SK-N-SH (cell line): ENCODE measurements at regions of chr7 and their contacts with region 1.

Region 1: DNA sequence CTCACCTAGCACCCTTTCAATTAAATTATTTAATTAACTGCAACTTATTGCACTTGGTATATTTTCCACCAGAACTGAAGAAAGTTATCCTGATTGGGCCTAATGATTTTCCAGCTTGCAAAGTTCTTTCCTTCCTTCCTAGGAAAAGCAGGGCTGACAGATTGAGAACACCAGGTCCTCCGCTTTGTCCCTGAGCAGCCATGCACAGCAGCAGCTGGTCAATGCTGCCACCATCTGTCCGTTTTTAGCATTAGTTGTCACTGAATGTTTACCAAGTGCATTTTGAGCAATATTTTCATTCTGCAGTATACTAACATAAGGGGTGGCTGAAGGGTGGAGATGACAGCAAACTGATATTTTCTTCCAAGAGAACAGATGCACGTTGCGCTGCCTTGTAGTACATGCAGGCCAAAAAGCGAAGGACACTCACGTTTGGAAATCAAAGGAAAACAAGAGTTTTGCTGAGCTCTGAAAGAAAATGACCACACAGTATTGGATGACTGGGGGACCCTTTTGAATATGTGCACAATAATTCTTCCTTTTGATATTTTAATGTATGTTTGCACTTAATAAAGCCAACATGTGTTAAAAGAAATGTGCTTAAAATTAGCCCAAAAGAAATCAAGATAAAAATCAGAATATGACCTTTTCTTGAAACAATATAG is 248.8 kb upstream of the PTN start:
- DNase-seq: peak; percentile 74
- H3K4me3 ChIP-seq: no peak overlapping the region
- H3K27ac ChIP-seq: peak overlapping the region in 1 of 2 experiments; percentile 48; a peak in 1 of 4 replicates
- H3K4me1 ChIP-seq: peaks cover 0 to 13% of the 10 kb centered on the region in 2 experiments; a peak in 3 of 4 replicates
- H3K27me3 ChIP-seq: no peaks in the 10 kb centered on the region
- CTCF ChIP-seq: peak; percentile 99
- EP300 ChIP-seq: no peak
- RAD21 ChIP-seq: peak; percentile 100

Region 2: DNA sequence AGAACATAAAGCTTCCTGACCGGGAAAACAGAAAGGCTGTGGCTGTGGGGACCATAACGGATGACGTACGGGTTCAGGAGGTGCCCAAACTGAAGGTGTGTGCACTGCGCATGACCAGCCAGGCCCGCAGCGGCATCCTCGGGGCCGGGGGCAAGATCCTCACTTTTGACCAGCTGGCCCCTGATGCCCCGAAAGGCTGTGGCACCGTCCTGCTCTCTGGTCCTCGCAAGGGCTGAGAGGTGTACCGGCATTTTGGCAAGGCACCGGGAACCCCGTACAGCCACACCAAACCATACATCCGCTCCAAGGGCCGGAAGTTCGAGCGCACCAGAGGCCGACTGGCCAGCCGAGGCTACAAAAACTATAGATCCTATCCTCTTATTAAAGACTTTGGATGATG is 428.1 kb before region 1 on chr7:
- CTCF ChIA-PET with region 1: interaction called, 117 read pairs
- POLR2A ChIA-PET with region 1: no interaction called
- DNase-seq: no peak
- H3K4me3 ChIP-seq: no peak overlapping the region
- H3K27ac ChIP-seq: no peak overlapping the region
- H3K4me1 ChIP-seq: peaks cover 0 to under 1% of the 10 kb centered on the region in 2 experiments; a peak in 2 of 4 replicates
- H3K27me3 ChIP-seq: no peaks in the 10 kb centered on the region
- CTCF ChIP-seq: no peak
- EP300 ChIP-seq: no peak
- RAD21 ChIP-seq: no peak

Region 3: GRCh38 chr7:137169282-137169698 is 423.1 kb before region 1 on chr7:
- CTCF ChIA-PET with region 1: interaction called, 117 read pairs
- POLR2A ChIA-PET with region 1: no interaction called
- DNase-seq: peak; percentile 83
- H3K4me3 ChIP-seq: no peak overlapping the region
- H3K27ac ChIP-seq: no peak overlapping the region
- H3K4me1 ChIP-seq: peaks cover 0 to 4% of the 10 kb centered on the region in 2 experiments; a peak in 2 of 4 replicates
- H3K27me3 ChIP-seq: no peaks in the 10 kb centered on the region
- CTCF ChIP-seq: peak; percentile 92
- EP300 ChIP-seq: peak in 1 of 2 experiments; percentile 69; a peak in 2 of 4 replicates
- RAD21 ChIP-seq: peak; percentile 100

Region 4: GRCh38 chr7:137454246-137454724 is 138.1 kb before region 1 on chr7:
- CTCF ChIA-PET with region 1: interaction called, 17 read pairs
- POLR2A ChIA-PET with region 1: no interaction called
- DNase-seq: peak; percentile 57
- H3K4me3 ChIP-seq: no peak overlapping the region
- H3K27ac ChIP-seq: no peak overlapping the region
- H3K4me1 ChIP-seq: no peaks in the 10 kb centered on the region; a peak in 1 of 4 replicates
- H3K27me3 ChIP-seq: no peaks in the 10 kb centered on the region
- CTCF ChIP-seq: peak; percentile 96
- EP300 ChIP-seq: no peak
- RAD21 ChIP-seq: peak; percentile 94

Region 5: GRCh38 chr7:137579913-137580640 is 12.3 kb before region 1 on chr7:
- CTCF ChIA-PET with region 1: interaction called, 57 read pairs
- POLR2A ChIA-PET with region 1: interaction called, 4 read pairs
- DNase-seq: no peak
- H3K4me3 ChIP-seq: no peak overlapping the region; a peak in 1 of 4 replicates
- H3K27ac ChIP-seq: peak overlapping the region in 1 of 2 experiments; percentile 96; a peak in 2 of 4 replicates
- H3K4me1 ChIP-seq: peaks cover 2 to 22% of the 10 kb centered on the region in 2 experiments; a peak in 2 of 4 replicates
- H3K27me3 ChIP-seq: no peaks in the 10 kb centered on the region
- CTCF ChIP-seq: no peak
- EP300 ChIP-seq: peak in 1 of 2 experiments; percentile 86; a peak in 2 of 4 replicates
- RAD21 ChIP-seq: no peak

Region 6: DNA sequence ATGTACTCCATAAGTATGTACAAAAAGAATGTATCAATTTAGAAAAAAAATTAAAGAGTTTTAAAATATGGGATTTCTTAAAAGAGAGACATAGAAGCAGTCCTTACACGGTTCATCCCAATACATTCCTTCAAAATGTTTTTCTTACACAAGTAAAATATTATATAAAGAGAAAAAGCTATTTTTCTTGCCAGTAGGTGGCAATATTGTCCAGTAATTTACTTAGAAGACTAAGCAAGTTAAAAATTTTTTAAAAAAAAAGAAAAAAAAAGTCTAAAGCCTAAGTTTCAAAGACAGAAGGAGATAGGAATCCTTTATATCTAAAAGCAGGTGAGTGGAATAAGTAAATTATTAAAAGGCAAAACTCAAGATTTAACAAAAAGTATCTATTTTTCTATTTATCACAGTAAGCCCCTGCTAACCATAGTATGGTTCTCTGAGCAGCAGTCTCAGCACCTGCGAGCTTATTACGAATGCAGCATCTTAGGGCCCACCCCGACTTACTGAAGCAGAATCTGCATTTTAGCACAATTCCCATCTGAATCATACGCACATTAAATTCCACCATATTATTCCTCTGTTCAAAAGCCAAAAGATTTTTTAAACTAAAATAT is 13.8 kb after region 1 on chr7:
- CTCF ChIA-PET with region 1: interaction called, 28 read pairs
- POLR2A ChIA-PET with region 1: no interaction called
- DNase-seq: no peak
- H3K4me3 ChIP-seq: no peak overlapping the region; a peak in 1 of 4 replicates
- H3K27ac ChIP-seq: no peak overlapping the region
- H3K4me1 ChIP-seq: no peaks in the 10 kb centered on the region; a peak in 1 of 4 replicates
- H3K27me3 ChIP-seq: no peaks in the 10 kb centered on the region
- CTCF ChIP-seq: peak; percentile 91
- EP300 ChIP-seq: no peak
- RAD21 ChIP-seq: peak; percentile 64

Region 7: GRCh38 chr7:137667633-137668387 is 75.4 kb after region 1 on chr7:
- CTCF ChIA-PET with region 1: no interaction called
- POLR2A ChIA-PET with region 1: no interaction called
- DNase-seq: no peak
- H3K4me3 ChIP-seq: no peak overlapping the region
- H3K27ac ChIP-seq: peak overlapping the region in 1 of 2 experiments; percentile 82; a peak in 2 of 4 replicates
- H3K4me1 ChIP-seq: peaks cover 22 to 44% of the 10 kb centered on the region in 2 experiments; a peak in 3 of 4 replicates
- H3K27me3 ChIP-seq: no peaks in the 10 kb centered on the region
- CTCF ChIP-seq: no peak
- EP300 ChIP-seq: peak in 1 of 2 experiments; percentile 70; a peak in 1 of 4 replicates
- RAD21 ChIP-seq: no peak